ENCODE measurements at regions of chr17 and their contacts with region 1.

Region 1: DNA sequence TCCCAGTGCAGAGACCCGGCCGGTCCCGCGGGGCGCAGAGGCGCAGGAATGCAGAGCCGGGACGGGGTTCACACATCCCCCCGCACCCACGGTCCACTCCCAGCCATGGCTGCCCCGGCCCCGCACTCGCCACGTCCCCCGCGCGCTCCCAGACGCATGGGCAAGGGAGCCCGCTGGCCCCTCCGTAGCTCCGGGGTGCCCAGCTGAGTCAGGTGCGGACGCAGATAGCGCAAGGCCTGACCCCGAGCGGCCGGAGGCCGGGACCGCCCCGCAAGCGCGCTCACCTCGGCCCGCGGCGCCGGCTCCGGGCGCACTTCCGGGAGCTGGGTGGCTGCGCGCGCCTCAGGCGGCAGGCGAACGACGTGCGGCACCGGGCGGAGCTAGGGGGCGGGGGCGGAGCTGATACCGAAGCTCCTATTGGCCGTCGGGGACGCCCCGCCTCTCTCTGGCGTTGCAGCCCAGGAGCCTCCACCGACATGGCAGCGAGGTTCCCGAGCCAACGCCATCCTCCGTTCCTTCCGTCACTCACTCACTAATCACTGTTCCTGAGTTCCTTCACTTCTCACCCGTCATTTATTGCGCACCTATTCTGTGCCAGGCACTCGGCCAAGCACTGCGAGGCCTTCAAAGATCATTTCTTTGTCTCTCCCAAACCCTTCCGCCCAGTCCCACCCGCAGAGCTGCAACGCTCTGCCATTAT is at the start of gene ZNF18:
- DNase-seq: peak; percentile 94
- H3K4me3 ChIP-seq: peak within 1 kb of the TSS; percentile 95
- H3K27ac ChIP-seq: peak within 1 kb of the TSS; percentile 47
- H3K4me1 ChIP-seq: peaks cover 9% of the 10 kb centered on the region
- CTCF ChIP-seq: no peak
- total RNA-seq, gene ZNF18: 9.1 and 10.6 TPM in 2 replicates

Region 2: DNA sequence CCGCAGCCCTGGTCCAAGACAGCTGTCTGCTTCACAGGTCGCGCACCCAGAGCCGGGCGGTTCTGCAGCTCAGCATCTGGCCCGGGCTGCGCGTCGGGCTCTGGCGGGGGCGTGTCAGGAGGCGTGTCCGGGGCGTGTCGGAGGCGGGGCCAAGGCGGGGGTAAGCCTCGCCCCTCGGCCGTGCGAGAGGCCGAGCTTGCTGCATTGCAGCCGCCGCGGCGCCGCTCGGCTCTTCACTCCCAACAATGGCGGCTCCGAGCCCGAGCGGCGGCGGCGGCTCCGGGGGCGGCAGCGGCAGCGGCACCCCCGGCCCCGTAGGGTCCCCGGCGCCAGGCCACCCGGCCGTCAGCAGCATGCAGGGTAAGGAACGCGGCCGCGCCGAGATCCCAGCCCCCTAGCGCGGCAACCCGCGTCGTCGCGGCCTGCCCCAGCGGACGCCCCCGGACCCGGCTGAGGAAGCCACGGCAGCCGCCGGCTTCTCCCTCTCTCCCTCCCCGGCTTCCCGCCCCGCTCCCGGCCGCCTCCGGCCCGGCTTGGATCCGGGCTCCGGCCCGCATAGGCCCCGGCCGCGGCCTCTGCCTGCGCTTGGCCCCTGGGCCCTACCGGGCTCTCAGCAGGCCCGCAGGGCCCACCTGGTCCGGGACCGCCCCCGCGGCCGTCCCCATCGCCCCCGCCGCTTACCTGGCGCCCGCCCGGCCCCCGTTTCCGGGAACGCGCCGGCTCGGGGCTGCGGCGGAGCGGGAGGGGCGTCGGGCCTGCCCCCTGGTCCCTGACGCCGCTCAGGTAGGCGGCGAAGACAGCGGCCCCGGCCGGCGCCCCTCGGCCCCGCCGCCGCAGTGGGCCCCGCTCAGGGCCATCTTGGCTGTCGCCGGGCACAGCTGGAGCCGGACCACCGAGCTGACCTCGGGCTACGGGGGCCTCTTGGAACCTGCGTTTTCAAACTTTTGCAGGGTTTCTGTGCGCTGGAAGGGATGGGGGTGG is 23.6 kb after region 1 on chr17 and contains the start of gene MAP2K4:
- CTCF ChIA-PET with region 1: no interaction called
- POLR2A ChIA-PET with region 1: interaction called, 39 read pairs
- intact Hi-C with region 1: loop called (anchors 2 kb)
- DNase-seq: peak; percentile 90
- H3K4me3 ChIP-seq: peak within 1 kb of the TSS; percentile 92
- H3K27ac ChIP-seq: peak within 1 kb of the TSS; percentile 51
- H3K4me1 ChIP-seq: peaks cover 17% of the 10 kb centered on the region
- CTCF ChIP-seq: no peak
- total RNA-seq, gene MAP2K4: 9.4 and 12.3 TPM in 2 replicates

Region 3: DNA sequence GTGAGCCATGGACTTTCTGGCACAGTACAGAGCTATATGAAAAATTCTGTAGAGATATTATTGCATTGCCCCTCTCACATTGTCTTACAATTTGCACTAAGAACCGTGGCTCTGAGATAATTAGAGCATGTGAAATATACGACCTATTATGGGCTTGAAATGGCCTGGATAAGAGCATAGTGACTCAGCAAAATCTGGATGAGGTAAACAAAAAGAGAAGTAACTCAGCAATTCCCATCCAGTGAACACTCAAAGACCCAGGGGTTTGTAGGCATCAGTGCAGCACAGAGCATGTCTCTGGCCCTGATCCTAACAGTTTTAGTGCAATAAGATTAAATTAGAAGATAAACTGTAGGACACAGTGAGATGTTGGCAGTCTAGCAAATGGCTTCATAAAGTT is 351.2 kb after region 1 on chr17:
- CTCF ChIA-PET with region 1: no interaction called
- POLR2A ChIA-PET with region 1: no interaction called
- intact Hi-C with region 1: no loop called
- DNase-seq: no peak
- H3K4me3 ChIP-seq: no peak overlapping the region
- H3K27ac ChIP-seq: no peak overlapping the region
- H3K4me1 ChIP-seq: no peaks in the 10 kb centered on the region
- CTCF ChIP-seq: no peak